ENCODE measurements at regions of chr20 and their contacts with region 1.

Region 1: GRCh38 chr20:10469599-10469998 is 34.5 kb downstream of the SLX4IP start:
- DNase-seq: peak in 1 of 2 donors; percentile 65
- ATAC-seq: peak; percentile 76 to 92 (median 91)
- H3K4me3 ChIP-seq: no peak overlapping the region
- H3K4me3 Mint-ChIP-seq: no peak overlapping the region
- H3K27ac ChIP-seq: no peak overlapping the region
- H3K27ac Mint-ChIP-seq: peak overlapping the region in 1 of 2 donors; percentile 70
- H3K4me1 ChIP-seq: peaks cover 2% of the 10 kb centered on the region
- H3K4me1 Mint-ChIP-seq: peaks cover 13 to 14% of the 10 kb centered on the region in 2 donors
- H3K27me3 ChIP-seq: no peaks in the 10 kb centered on the region
- H3K27me3 Mint-ChIP-seq: no peaks in the 10 kb centered on the region
- CTCF ChIP-seq: peak; percentile 69

Region 2: GRCh38 chr20:10536531-10536930 is 66.9 kb after region 1 on chr20:
- intact Hi-C with region 1: loop called (anchors 1 kb)
- DNase-seq: peak in 1 of 2 donors; percentile 44
- ATAC-seq: peak in 1 of 3 donors; percentile 29
- H3K4me3 ChIP-seq: no peak overlapping the region
- H3K4me3 Mint-ChIP-seq: no peak overlapping the region
- H3K27ac ChIP-seq: no peak overlapping the region
- H3K27ac Mint-ChIP-seq: no peak overlapping the region
- H3K4me1 ChIP-seq: no peaks in the 10 kb centered on the region
- H3K4me1 Mint-ChIP-seq: peaks cover 13 to 14% of the 10 kb centered on the region in 2 donors
- H3K27me3 ChIP-seq: no peaks in the 10 kb centered on the region
- H3K27me3 Mint-ChIP-seq: no peaks in the 10 kb centered on the region
- CTCF ChIP-seq: peak; percentile 37

Region 3: DNA sequence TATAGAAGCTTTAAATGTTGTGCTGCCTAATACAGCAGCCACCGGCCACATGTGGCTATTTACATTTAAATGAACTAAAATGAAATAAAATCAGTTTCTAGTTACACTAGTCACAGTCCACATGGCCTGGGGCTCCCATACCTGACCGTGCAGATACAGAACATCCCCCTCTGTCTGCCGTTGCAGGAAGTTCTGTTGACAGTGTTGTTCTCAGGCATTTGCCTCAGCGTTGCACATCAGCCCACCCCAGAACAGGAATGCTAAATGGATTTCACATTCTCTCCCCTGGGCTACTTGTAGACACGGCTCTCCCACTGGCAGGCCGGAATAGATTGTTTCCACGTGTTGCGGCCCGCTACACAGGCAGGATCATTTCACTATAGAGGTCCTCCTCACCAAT is 177.9 kb after region 1 on chr20:
- intact Hi-C with region 1: loop called (anchors 1 kb)
- DNase-seq: peak in 1 of 2 donors; percentile 15
- ATAC-seq: peak; percentile 37 to 64 (median 62)
- H3K4me3 ChIP-seq: no peak overlapping the region
- H3K4me3 Mint-ChIP-seq: no peak overlapping the region
- H3K27ac ChIP-seq: no peak overlapping the region
- H3K27ac Mint-ChIP-seq: no peak overlapping the region
- H3K4me1 ChIP-seq: no peaks in the 10 kb centered on the region
- H3K4me1 Mint-ChIP-seq: peaks cover 0 to 9% of the 10 kb centered on the region in 2 donors
- H3K27me3 ChIP-seq: no peaks in the 10 kb centered on the region
- H3K27me3 Mint-ChIP-seq: no peaks in the 10 kb centered on the region
- CTCF ChIP-seq: peak; percentile 21

Region 4: DNA sequence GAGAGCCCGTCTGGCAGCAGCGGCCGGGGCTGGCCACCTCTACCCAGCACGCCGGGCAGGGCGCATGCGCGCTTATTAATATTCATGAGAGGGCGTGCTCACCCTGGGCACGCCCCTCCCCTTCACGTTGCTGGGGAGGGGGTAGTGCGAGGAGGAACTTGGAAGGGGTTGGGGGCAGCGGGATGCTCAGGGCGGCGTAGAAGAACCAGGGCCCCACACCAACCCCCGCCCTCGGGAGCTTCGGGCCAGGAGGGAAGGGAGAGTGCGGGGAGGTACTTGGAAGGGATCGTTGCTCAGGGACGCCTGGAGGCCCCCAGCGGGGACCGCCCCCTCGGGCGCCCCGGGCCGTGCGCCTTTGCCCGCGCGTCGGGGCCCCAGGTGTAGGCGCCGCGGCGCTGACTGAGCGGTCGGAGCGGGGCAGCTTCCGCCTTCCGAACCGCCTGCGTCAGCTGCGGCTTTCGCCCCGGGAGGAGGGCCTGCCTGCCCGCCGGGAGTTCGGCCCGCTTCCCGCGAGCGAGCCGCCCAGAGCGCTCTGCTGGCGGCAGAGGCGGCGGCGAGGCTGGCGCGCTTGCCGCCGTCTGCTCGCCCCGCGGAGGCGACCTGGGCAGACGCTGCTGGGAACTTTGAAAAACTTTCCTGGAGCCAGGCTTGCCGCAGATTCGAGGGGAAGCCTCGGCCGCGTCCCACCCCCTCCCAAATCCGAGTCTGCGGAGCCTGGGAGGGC is 204.6 kb after region 1 on chr20 and contains the start of gene JAG1:
- intact Hi-C with region 1: loop called (anchors 5 kb)
- DNase-seq: peak; percentile 56 to 81
- ATAC-seq: peak; percentile 68 to 86 (median 75)
- H3K4me3 ChIP-seq: peak within 1 kb of the TSS; percentile 48
- H3K4me3 Mint-ChIP-seq: peak within 1 kb of the TSS; percentile 97
- H3K27ac ChIP-seq: peak within 1 kb of the TSS; percentile 80
- H3K27ac Mint-ChIP-seq: peak within 1 kb of the TSS; percentile 87 to 97
- H3K4me1 ChIP-seq: peaks cover 33% of the 10 kb centered on the region
- H3K4me1 Mint-ChIP-seq: peaks cover 23 to 40% of the 10 kb centered on the region in 2 donors
- H3K27me3 ChIP-seq: peaks cover 8% of the 10 kb centered on the region
- H3K27me3 Mint-ChIP-seq: peaks cover 22 to 23% of the 10 kb centered on the region in 2 donors
- CTCF ChIP-seq: no peak
- total RNA-seq, gene JAG1: 8.1 to 12.3 (median 8.7) TPM